Testis (tissue), 5 donors: ENCODE measurements at regions of chr18 and their contacts with region 1.

Region 1: DNA sequence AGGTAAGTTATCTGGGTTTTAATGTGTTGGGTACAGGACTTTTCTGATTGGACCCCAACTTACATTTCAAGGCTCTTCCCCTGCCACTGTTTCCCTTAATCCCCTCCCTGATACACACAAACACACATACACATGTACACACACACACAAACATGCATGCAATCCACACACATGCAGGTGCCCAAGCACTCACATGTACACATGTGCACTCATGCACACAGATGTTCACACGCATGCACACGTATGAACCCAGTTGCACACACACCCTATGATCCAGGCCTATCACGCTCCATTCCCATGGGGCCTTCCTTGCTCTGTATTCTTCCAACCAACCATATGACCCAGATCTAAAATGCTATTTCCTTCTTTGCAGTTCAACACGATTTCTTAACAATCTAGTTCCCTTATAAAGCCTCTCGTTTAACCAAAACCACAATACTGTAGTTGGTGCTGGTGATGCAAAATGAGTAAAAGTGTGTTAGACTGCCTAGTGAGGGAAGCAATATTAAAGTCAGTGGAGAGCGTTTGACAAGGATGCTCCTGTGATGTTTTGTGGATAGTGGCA is 11.1 kb downstream of the SERPINB8 start:
- DNase-seq: no peak
- H3K4me3 ChIP-seq: no peak overlapping the region
- H3K27ac ChIP-seq: no peak overlapping the region
- H3K4me1 ChIP-seq: no peaks in the 10 kb centered on the region
- H3K27me3 ChIP-seq: no peaks in the 10 kb centered on the region
- CTCF ChIP-seq: no peak
- POLR2A ChIP-seq: no peak

Region 2: DNA sequence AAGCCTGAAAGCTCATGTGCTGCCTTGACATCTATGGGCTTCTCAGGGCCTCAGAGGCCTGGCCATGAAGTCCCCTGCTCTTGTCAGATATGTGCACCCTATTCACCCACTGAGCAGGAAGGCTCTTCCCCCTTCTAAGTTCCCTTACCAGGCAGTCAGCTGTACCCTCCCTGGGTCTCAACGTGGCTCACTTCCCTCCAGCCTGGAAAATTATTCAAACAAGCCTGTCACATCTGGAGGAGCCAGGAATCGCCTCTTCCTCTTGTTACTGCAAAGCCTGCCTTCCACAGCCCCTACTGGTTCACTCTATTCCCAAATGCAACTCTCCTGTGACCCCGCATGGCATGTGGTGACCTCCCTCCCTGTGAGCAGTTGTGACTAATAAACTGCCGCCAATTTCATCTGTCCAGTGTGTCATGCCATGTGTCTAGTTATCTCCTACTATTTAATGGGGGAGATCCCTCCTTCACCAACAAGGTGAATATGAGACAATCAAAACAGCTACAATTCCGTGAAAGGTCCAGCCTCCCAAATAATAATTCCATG is 19.5 kb before region 1 on chr18:
- intact Hi-C with region 1: loop called (anchors 1 kb)
- DNase-seq: no peak
- H3K4me3 ChIP-seq: no peak overlapping the region
- H3K27ac ChIP-seq: no peak overlapping the region
- H3K4me1 ChIP-seq: no peaks in the 10 kb centered on the region
- H3K27me3 ChIP-seq: no peaks in the 10 kb centered on the region
- CTCF ChIP-seq: no peak
- POLR2A ChIP-seq: no peak